Gastrocnemius medialis (tissue), 4 donors: ENCODE measurements at regions of chr5 and their contacts with region 1.

Region 1: GRCh38 chr5:107673368-107674136 is 2.8 kb upstream of the EFNA5 start:
- DNase-seq: peak; percentile 57 to 63
- ATAC-seq: peak; percentile 80 to 81
- H3K4me3 ChIP-seq: peak overlapping the region; percentile 57 to 74 (median 67)
- H3K27ac ChIP-seq: peak overlapping the region in 2 of 4 donors; percentile 45 to 58
- H3K4me1 ChIP-seq: peaks cover 10 to 27% of the 10 kb centered on the region in 2 donors
- H3K27me3 ChIP-seq: peaks cover 3 to 11% (median 4%) of the 10 kb centered on the region in 3 donors
- CTCF ChIP-seq: peak; percentile 77 to 95 (median 84)
- POLR2A ChIP-seq: no peak

Region 2: GRCh38 chr5:106277540-106278096 is 1395.9 kb before region 1 on chr5:
- in situ Hi-C with region 1: no loop called
- intact Hi-C with region 1: loop called (anchors 10 kb)
- DNase-seq: no peak
- ATAC-seq: no peak
- H3K4me3 ChIP-seq: no peak overlapping the region
- H3K27ac ChIP-seq: no peak overlapping the region
- H3K4me1 ChIP-seq: no peaks in the 10 kb centered on the region
- H3K27me3 ChIP-seq: no peaks in the 10 kb centered on the region
- CTCF ChIP-seq: no peak
- POLR2A ChIP-seq: no peak

Region 3: DNA sequence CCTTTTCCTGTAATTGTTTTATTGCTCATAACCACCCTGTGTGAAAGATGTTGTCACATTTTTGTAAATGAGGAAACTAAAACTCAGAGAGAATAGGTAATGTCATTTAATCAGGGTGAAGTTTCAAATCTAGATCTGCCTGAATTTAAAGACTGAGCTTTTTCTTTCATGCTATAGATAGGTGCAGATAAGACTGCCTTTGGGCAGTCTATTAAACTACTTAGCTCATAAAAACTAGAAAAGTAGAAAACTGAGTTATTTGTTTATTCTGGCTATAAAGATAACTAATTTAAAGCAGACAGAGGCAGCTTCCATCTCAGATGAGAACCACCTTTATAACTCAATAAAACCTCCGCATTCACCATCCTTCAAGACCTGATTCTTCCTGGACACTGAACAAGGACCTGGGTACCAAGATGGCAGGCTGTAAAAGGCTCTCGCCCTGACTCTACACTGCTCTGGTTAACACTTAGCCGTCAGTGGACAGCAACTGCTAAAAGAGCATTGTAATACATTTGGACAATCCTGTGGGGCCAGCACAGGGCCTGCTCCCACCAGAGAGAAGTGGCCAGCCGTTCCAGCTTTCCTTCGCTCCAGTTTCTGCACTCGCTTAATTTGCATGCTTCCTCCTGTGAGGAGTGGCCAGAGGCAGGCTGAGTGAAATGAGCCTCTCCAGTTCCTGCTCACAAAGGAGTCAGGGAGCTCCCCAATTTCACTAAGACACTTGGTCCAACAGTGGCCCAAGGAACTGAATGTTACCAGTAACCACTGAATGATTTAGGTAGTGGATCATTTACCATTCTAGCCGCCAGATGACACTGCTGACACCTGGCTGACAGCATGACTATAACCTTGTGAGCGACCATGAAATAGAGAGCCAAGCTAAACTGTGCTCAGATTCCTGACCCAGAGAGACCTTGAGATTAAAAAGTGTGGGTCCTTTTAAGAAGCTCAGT is 569.2 kb before region 1 on chr5:
- in situ Hi-C with region 1: no loop called
- intact Hi-C with region 1: loop called (anchors 10 kb)
- DNase-seq: peak; percentile 37 to 74
- ATAC-seq: peak; percentile 95 to 99
- H3K4me3 ChIP-seq: no peak overlapping the region
- H3K27ac ChIP-seq: peak overlapping the region; percentile 68 to 75 (median 71)
- H3K4me1 ChIP-seq: peaks cover 3 to 6% of the 10 kb centered on the region in 2 donors
- H3K27me3 ChIP-seq: no peaks in the 10 kb centered on the region
- CTCF ChIP-seq: peak; percentile 19 to 44 (median 24)
- POLR2A ChIP-seq: no peak

Region 4: DNA sequence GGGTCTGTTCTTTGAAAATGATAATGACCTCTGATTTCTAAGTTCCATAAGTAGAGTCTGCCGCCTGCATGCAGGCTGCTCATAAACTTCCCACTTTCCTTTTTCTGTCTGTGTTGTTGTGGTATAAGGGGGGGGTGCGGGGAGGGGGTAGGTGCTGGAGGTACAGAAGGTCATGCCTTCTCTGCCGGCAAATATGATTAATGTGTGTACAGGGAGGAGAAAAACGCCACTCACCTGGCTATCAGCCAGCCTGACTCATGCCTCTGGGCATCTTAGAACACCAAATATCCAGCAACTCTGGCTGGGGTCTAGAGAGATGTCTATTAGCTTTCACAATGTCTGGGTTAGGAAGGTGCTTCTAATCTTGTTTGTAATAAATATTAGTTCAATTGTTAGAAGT is 131.1 kb before region 1 on chr5:
- in situ Hi-C with region 1: no loop called
- intact Hi-C with region 1: loop called (anchors 5 kb)
- DNase-seq: peak; percentile 54 to 77
- ATAC-seq: peak; percentile 80 to 89
- H3K4me3 ChIP-seq: peak overlapping the region in 2 of 4 donors; percentile 26 to 32
- H3K27ac ChIP-seq: peak overlapping the region; percentile 70 to 72 (median 70)
- H3K4me1 ChIP-seq: peaks cover 9 to 18% of the 10 kb centered on the region in 2 donors
- H3K27me3 ChIP-seq: no peaks in the 10 kb centered on the region
- CTCF ChIP-seq: no peak
- POLR2A ChIP-seq: no peak

Region 5: GRCh38 chr5:107571621-107572536 is 101.7 kb before region 1 on chr5:
- in situ Hi-C with region 1: no loop called
- intact Hi-C with region 1: loop called (anchors 2 kb)
- DNase-seq: peak; percentile 75 to 87
- ATAC-seq: peak; percentile 93 to 97
- H3K4me3 ChIP-seq: peak overlapping the region; percentile 53 to 80 (median 61)
- H3K27ac ChIP-seq: peak overlapping the region; percentile 47 to 77 (median 66)
- H3K4me1 ChIP-seq: peaks cover 10 to 16% of the 10 kb centered on the region in 2 donors
- H3K27me3 ChIP-seq: no peaks in the 10 kb centered on the region
- CTCF ChIP-seq: peak; percentile 81 to 94 (median 89)
- POLR2A ChIP-seq: no peak